Sigmoid colon (tissue), 7 donors: ENCODE measurements at regions of chr14 and their contacts with region 1.

Region 1: DNA sequence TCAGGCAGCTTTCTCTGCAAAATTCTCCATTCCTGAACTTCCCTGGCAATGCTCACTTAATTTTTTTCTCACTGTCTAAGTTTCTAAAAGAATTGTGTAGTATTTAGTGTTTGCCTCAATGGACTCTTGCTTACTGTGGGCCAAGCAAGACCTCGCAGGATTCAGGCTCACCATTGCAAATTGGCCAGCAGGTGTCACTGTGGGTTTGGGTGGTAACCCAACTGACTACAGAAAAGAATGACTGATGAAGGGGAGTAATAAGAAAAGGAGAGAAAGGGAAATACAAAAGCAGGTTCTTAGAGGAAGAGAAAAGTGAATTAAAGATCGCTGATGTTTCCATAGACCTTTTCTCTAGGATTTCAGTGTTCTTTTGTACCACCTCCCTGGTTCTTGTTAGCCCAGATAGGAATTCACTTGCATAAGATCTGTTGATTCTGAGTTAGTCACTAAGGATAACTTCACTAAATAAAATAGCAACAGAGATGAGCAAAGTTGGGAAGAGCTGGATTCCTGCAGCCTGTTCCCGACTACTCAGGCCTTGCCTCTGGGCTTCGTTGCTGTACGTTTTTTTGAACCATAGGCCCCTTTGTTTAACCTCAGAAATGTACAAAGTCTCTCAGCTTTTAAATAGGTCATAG is 386.5 kb upstream of the DDHD1 start:
- DNase-seq: peak; percentile 89
- H3K4me3 ChIP-seq: no peak overlapping the region
- H3K27ac ChIP-seq: peak overlapping the region; percentile 37 to 71 (median 63)
- H3K4me1 ChIP-seq: peaks cover 0 to 70% (median 48%) of the 10 kb centered on the region in 4 donors
- H3K27me3 ChIP-seq: no peaks in the 10 kb centered on the region
- CTCF ChIP-seq: peak; percentile 72 to 87 (median 82)
- EP300 ChIP-seq: no peak
- POLR2A ChIP-seq: no peak

Region 2: DNA sequence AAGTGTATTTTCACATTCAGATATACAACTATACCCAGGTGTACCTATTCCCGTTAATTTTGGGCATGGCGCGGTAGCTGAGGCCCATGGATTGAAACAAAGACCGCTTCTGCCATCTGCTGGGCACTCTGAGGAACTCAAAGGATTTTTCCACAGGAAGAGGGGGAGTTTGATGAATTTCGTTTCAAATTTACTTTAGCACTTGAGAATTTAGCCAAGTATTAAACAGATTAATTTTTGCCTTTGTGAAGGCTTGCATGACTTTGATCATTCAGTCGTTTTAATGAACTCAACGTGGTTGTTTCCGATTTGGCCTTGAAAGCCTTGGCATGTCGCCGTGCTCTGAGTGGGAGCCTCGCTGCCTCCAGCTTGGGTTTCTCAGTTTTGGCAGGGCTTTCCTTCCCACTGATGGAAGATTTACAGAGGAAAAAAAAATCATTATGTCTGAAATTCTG is 233.3 kb before region 1 on chr14:
- intact Hi-C with region 1: loop called (anchors 10 kb)
- DNase-seq: peak; percentile 73
- H3K4me3 ChIP-seq: peak overlapping the region; percentile 15 to 45 (median 39)
- H3K27ac ChIP-seq: peak overlapping the region; percentile 15 to 71 (median 52)
- H3K4me1 ChIP-seq: peaks cover 0 to 25% (median 17%) of the 10 kb centered on the region in 4 donors
- H3K27me3 ChIP-seq: no peaks in the 10 kb centered on the region
- CTCF ChIP-seq: peak; percentile 53 to 78 (median 72)
- EP300 ChIP-seq: no peak
- POLR2A ChIP-seq: no peak

Region 3: DNA sequence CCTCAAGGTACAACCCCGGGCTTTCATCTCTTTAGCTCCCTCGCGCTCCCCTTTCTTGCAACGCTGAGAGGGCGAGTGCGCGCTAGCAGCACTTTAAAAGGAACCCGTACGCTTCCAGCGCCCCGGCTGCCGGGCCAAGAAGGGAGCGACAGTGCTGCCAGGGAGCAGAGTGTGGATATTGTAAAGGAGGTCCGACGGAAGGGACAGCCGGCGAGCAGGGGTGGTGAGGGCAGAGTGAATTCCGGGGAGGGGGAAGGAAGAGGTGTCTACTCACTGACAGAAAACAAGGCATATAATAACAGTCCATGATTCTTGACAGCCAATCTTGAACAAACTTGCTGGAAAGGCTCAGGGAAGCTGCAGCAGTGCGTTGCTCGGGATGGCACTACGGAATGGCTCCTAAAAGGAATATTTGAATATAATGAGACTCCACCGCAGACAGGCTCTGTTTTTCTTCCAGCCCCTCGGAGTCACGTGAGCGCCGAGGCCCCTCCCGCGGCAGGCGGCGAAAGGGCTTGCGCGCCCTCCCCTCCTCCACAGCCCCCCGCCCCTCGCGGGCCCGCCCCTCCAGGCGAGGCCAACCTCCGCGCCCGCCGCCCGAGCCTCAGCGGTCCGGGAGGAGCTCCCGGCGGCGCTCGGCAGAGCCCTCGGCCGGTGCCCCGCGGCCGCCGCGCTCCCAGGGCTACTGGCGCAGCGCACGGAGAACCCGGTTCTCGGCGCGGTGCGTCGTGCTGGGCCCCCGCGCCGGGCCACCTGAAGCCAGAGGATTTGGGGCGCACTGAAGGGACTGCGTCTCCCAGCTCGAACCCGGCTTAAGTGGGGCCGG is 413.6 kb after region 1 on chr14:
- intact Hi-C with region 1: loop called (anchors 2 kb)
- DNase-seq: peak; percentile 94
- H3K4me3 ChIP-seq: peak overlapping the region; percentile 49 to 66 (median 58)
- H3K27ac ChIP-seq: peak overlapping the region; percentile 79 to 89 (median 82)
- H3K4me1 ChIP-seq: peaks cover 0 to 51% (median 42%) of the 10 kb centered on the region in 4 donors
- H3K27me3 ChIP-seq: peaks cover 7 to 46% (median 27%) of the 10 kb centered on the region in 3 donors
- CTCF ChIP-seq: no peak
- EP300 ChIP-seq: no peak
- POLR2A ChIP-seq: peak in 1 of 2 donors; percentile 26

Region 4: DNA sequence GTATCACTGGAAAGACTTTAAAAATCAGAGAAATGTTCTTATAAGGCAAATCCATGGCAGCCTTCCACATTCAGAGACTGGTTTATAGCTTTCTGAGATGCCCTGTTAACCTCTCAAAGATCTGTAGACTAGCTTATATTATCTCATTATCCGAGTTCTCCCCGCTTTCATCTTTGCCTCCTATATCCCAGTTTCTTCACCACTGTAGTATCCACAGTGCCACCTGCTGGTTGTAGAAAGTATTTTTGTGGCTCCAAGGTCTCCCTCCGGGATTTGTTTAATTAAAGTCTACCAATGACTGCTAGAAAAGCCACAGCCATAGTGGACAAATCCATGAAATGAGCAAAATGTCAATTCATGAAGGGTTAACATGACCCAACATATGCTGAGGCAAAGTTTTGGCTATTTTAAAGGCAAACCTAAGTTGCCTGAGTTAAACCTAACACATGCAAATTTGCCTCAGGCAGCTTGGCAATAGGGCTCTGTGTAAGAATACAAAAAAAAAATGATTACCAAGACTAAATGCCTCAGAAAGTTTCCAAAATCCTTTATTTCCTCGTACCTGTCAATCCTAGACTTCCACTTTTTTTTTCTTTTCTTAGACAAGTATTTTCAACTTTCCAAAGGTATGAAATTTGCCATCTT is 635.8 kb after region 1 on chr14:
- intact Hi-C with region 1: loop called (anchors 1 kb)
- DNase-seq: peak; percentile 73
- H3K4me3 ChIP-seq: no peak overlapping the region
- H3K27ac ChIP-seq: no peak overlapping the region
- H3K4me1 ChIP-seq: peaks cover 0 to 32% (median 14%) of the 10 kb centered on the region in 4 donors
- H3K27me3 ChIP-seq: no peaks in the 10 kb centered on the region
- CTCF ChIP-seq: peak; percentile 65 to 84 (median 82)
- EP300 ChIP-seq: no peak
- POLR2A ChIP-seq: no peak

Region 5: GRCh38 chr14:54329082-54329695 is 789.6 kb after region 1 on chr14:
- intact Hi-C with region 1: loop called (anchors 5 kb)
- DNase-seq: no peak
- H3K4me3 ChIP-seq: no peak overlapping the region
- H3K27ac ChIP-seq: no peak overlapping the region
- H3K4me1 ChIP-seq: peaks cover 0 to 11% (median 7%) of the 10 kb centered on the region in 4 donors
- H3K27me3 ChIP-seq: no peaks in the 10 kb centered on the region
- CTCF ChIP-seq: peak; percentile 25 to 52 (median 46)
- EP300 ChIP-seq: no peak
- POLR2A ChIP-seq: no peak

Region 6: DNA sequence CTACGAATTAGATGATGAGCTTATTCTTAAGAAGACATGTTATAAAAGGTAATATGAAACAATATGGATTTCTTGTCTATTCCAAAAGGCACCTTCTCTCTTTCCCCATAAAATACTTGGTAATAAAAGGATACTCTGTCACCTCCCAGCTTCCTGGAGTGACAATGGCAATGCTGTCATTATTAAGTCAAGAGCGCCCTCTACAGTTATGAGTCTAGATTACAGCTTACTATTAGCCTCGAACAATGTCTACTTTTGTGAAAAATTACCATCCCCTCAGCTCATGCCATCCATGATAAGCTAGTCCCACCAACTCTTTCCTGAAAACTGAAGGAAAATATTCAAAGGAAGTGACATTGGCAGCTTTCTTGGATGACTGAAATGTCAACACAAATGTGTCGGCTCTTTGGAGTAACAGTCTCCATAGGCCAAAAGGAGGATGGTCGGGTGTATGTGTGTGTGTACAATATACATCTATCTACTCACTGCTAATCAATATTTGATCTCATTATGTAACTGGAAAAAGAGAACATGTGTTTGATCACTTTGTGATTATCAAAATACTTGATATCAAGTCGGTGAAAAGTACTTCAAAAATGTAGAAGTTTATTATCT is 808.5 kb after region 1 on chr14:
- intact Hi-C with region 1: loop called (anchors 5 kb)
- DNase-seq: no peak
- H3K4me3 ChIP-seq: no peak overlapping the region
- H3K27ac ChIP-seq: peak overlapping the region in 1 of 4 donors; percentile 56
- H3K4me1 ChIP-seq: no peaks in the 10 kb centered on the region
- H3K27me3 ChIP-seq: no peaks in the 10 kb centered on the region
- CTCF ChIP-seq: peak; percentile 12 to 61 (median 49)
- EP300 ChIP-seq: no peak
- POLR2A ChIP-seq: no peak